Kidney (tissue), 22 donors: ENCODE measurements at regions of chr7 and their contacts with region 1.

Region 1: GRCh38 chr7:140003913-140004382 is 58.8 kb downstream of the PARP12 start:
- DNase-seq: peak in 3 of 5 donors; percentile 54 to 80 (median 63)
- H3K4me3 ChIP-seq: no peak overlapping the region
- H3K27ac ChIP-seq: no peak overlapping the region
- H3K4me1 ChIP-seq: no peaks in the 10 kb centered on the region
- H3K27me3 ChIP-seq: no peaks in the 10 kb centered on the region
- CTCF ChIP-seq: peak; percentile 41

Region 2: DNA sequence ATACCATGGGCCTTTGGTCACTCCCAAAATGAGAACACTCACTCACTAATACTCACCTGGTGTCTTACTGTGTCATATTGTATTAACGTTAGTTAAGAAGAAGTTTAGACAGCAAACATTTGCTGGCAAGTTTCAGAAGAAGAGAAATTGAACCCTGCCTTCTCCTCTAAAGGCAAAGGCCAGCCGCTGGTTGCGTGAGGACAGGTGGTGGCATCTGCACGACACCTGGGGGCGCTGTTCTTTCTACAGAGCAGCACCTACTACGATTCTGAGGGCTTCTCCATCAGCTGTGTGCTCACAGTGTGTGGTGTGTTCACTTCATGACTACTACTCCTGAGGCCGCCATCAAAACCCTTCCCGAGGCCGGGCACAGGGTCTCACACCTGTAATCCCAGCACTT is 498.4 kb before region 1 on chr7:
- intact Hi-C with region 1: loop called (anchors 10 kb)
- DNase-seq: no peak
- H3K4me3 ChIP-seq: no peak overlapping the region
- H3K27ac ChIP-seq: no peak overlapping the region
- H3K4me1 ChIP-seq: no peaks in the 10 kb centered on the region
- H3K27me3 ChIP-seq: no peaks in the 10 kb centered on the region
- CTCF ChIP-seq: no peak

Region 3: DNA sequence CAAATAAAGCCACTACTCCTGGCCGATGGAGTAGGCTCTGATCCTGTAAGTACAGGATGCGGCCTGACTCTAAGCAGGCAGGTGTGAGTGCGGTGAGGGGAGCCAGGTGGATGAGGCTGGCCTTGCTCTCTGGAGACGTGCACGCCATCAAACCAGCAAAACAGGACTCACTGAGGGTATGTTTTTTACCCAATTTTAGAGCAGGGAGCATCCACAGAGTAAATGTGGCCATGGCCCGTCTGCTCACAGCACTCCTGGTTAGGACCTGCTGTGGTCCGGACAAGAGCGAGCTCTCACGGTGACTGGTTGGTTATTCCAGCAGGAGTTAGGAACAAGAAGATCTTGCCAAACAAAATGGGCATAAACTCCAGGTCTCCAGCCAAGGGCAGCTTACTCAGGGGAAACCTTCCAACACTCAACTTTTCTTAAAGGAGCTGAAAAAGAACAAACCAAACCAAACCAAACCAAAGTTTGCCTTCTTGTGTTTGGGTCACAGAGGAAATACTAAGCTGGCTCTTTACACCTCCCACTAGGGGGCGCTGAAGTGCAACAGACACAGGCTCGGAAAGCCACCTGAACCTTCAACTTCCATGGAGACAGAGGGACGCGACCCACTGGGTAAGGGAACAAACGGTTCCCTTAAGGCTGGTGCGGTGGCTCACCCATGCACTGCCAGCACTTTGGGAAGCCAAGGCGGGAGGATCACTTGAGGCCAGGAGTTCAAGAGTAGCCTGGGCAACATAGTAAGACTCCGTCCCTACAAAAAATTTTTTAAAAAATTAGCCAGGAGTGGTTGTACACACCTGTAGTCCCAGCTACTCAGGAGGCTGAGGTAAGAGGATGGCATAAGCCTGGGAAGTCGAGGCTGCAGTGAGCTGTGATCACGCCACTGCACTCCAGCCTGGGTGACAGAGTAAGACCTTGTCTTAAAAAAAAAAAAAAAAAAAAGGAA is 358.1 kb before region 1 on chr7:
- intact Hi-C with region 1: loop called (anchors 10 kb)
- DNase-seq: peak; percentile 85 to 95 (median 88)
- H3K4me3 ChIP-seq: no peak overlapping the region
- H3K27ac ChIP-seq: peak overlapping the region; percentile 44 to 60
- H3K4me1 ChIP-seq: peaks cover 3 to 20% (median 19%) of the 10 kb centered on the region in 3 donors
- H3K27me3 ChIP-seq: no peaks in the 10 kb centered on the region
- CTCF ChIP-seq: peak; percentile 94